Activated CD4-positive, alpha-beta T cell treated with anti-CD3 and anti-CD28 coated beads, Interleukin-2, amount 10 ng/mL, durations not matched to agents 7 days and 5 days (primary cell): ENCODE measurements at regions of chr9 and their contacts with region 1.

Region 1: DNA sequence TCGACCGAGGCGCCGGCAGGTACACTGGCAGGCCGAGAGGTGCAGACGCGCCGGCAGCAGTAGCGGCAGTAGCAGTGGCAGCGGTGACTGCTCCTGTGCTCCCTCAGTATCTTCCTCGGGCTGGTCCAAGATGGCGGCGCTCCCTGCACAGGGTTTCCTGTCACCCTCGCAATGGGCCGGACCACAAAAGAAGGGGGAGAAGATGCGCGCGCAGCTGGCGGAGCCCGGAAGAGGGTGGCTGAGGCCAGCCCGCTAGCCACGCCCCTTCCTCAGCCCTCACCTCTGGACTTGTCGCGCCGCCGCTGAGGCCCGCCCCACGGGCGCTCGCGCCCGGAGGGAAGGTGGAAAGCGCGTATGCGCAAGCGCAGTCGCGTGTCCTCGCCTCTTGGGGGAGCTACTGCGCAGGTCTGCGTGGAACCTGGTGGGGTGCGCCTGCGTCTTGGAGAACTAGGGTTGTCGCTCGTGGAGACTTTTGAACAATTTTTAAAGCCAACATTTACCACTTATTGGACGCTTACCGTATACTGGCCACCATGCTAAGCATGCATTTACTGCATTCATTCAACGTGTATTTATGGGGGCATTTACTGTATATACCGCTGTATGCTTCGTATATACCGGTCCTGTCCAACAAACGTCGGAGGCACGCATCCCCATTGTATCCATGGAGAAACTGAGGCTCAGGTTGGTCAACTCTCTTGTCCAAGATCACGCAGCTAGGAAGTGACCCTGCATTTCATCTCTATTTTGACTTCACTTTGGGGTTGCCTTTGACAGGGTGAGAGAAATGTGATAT is at the start of gene RAB14:
- DNase-seq: peak; percentile 100
- H3K4me3 Mint-ChIP-seq: peak within 1 kb of the TSS; percentile 96
- H3K27ac Mint-ChIP-seq: peak within 1 kb of the TSS; percentile 93
- H3K4me1 Mint-ChIP-seq: peaks cover 57% of the 10 kb centered on the region
- H3K27me3 Mint-ChIP-seq: no peaks in the 10 kb centered on the region
- total RNA-seq, gene RAB14: 65.8 to 66.6 TPM

Region 2: GRCh38 chr9:121185178-121185745 is 16.7 kb before region 1 on chr9:
- CTCF ChIA-PET with region 1: interaction called, 12 read pairs
- POLR2A ChIA-PET with region 1: no interaction called
- DNase-seq: no peak
- H3K4me3 Mint-ChIP-seq: no peak overlapping the region
- H3K27ac Mint-ChIP-seq: no peak overlapping the region
- H3K4me1 Mint-ChIP-seq: peaks cover 48% of the 10 kb centered on the region
- H3K27me3 Mint-ChIP-seq: no peaks in the 10 kb centered on the region

Region 3: DNA sequence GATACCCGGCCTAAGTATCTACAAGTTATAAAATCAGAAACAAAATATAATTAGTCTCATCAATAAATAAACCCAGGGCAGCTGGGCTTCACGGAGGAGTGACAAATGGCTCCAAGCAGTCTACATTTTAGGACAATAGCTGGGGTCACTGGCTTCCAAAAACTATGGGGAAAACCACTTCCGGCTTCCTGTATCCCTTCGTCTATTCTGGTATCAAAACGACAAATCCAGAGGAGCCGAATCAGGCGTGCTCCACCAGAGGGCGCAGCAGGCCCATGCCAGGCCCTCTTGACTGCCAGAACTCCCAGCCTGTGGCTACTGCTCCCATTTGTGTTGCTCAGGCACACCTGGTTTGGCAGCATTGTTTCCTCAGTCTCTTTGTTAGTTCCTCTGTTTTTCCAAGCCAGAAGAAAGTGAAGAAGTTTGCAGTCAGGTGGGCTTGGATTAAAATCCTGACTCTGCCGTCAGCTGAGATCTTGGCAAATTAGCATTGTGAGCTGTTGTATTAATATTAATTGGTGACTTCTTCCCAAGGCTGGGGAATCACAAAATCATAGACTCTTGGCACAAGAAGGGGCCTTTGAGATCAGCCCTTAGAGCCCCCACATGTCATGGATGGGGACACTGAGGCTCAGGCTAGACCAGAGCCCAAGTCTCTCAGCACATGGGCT is 11.3 kb after region 1 on chr9:
- CTCF ChIA-PET with region 1: interaction called, 16 read pairs
- POLR2A ChIA-PET with region 1: no interaction called
- DNase-seq: peak; percentile 66
- H3K4me3 Mint-ChIP-seq: no peak overlapping the region
- H3K27ac Mint-ChIP-seq: peak overlapping the region; percentile 25
- H3K4me1 Mint-ChIP-seq: peaks cover 24% of the 10 kb centered on the region
- H3K27me3 Mint-ChIP-seq: no peaks in the 10 kb centered on the region